OCI-LY7 (cell line): ENCODE measurements at regions of chr20 and their contacts with region 1.

Region 1: GRCh38 chr20:16701296-16701695 is 28.5 kb upstream of the SNRPB2 start:
- DNase-seq: peak; percentile 52
- H3K4me3 ChIP-seq: no peak overlapping the region
- H3K27ac ChIP-seq: no peak overlapping the region
- H3K4me1 ChIP-seq: no peaks in the 10 kb centered on the region
- CTCF ChIP-seq: peak; percentile 74

Region 2: GRCh38 chr20:16821211-16822089 is 120.2 kb after region 1 on chr20:
- CTCF ChIA-PET with region 1: no interaction called
- POLR2A ChIA-PET with region 1: no interaction called
- intact Hi-C with region 1: loop called (anchors 5 kb)
- DNase-seq: peak; percentile 57
- H3K4me3 ChIP-seq: no peak overlapping the region
- H3K27ac ChIP-seq: no peak overlapping the region
- H3K4me1 ChIP-seq: no peaks in the 10 kb centered on the region
- CTCF ChIP-seq: peak; percentile 94

Region 3: DNA sequence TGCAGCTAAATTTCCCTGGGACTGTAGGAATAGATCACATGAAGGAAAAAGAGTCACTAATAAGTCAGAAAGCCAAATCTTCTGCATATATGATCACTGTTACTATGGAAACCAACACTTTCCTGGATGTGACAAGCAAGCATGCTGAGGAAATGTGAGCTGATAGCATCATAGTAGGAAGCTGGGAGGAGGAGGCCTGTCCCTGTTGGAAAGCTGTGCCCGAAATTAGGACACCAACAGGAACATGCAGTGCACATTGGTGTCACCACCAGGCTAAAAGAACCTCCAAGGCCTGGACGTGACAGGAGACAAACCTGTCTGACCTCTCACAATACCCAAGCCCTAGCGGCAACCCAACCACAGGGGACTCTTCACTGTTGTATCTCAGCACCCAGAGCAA is 343.6 kb after region 1 on chr20:
- CTCF ChIA-PET with region 1: no interaction called
- POLR2A ChIA-PET with region 1: no interaction called
- intact Hi-C with region 1: no loop called
- DNase-seq: no peak
- H3K4me3 ChIP-seq: no peak overlapping the region
- H3K27ac ChIP-seq: no peak overlapping the region
- H3K4me1 ChIP-seq: no peaks in the 10 kb centered on the region
- CTCF ChIP-seq: no peak

Region 4: DNA sequence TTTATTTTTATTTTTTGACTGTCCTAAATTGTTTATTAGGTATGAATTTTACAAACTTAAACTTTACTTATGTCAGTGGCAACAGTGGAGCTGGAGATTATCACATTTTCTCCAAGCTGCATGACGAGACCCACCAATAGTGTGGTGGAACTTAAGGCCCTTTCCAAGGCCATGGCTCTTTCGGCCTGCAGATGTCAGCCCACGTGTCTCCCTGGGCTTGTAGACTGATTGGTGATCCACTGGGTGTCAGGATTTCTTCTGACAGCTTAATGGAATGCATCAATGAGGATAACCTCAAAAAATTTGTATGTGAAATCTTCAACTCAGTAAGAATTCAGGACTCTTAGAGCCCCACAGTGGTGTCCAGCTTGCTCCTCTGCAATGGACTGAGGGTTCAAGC is 1388.7 kb after region 1 on chr20:
- CTCF ChIA-PET with region 1: no interaction called
- POLR2A ChIA-PET with region 1: no interaction called
- intact Hi-C with region 1: no loop called
- DNase-seq: no peak
- H3K4me3 ChIP-seq: no peak overlapping the region
- H3K27ac ChIP-seq: no peak overlapping the region
- H3K4me1 ChIP-seq: no peaks in the 10 kb centered on the region
- CTCF ChIP-seq: no peak